ENCODE measurements at regions of chr5 and their contacts with region 1.

Region 1: DNA sequence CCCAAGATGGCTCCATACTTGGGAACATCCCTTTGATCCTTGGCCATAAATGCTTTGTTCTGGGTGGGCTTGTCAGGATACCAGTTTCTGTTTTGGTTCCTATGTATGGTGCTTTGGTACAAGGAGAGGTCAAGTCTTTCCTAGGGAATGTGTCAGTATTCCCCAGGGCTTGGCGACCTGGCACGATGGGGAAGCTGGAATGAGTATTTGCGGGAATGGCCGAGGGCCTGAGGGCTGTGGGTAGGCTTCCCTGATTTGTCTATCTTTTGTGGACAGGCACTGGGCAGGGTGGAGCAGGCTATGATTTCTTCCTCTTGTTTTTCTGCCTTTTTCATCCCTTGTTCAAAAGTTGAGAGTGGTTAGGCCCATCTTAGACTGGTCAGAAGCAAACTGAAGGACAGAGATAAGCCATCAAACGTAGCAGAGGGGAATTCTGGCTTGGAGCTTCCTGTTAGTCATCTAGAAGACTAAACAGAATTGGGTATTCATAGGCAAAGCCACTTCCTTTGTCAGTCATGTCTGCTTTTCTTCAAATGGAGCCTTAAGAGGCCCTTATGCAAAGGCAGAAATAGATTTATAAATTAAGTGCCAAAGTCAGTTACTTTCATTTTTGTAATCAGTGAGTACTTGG is 13.7 kb downstream of the DOCK2 start:
- DNase-seq: no peak
- ATAC-seq: peak; percentile 57
- H3K4me3 Mint-ChIP-seq: peak overlapping the region; percentile 79
- H3K27ac Mint-ChIP-seq: peak overlapping the region; percentile 86
- H3K4me1 Mint-ChIP-seq: peaks cover 89% of the 10 kb centered on the region
- H3K27me3 Mint-ChIP-seq: no peaks in the 10 kb centered on the region

Region 2: GRCh38 chr5:169637085-169637548 is 13.7 kb before region 1 on chr5 and contains the start of gene DOCK2:
- POLR2A ChIA-PET with region 1: interaction called, 39 read pairs
- DNase-seq: peak; percentile 82
- ATAC-seq: peak; percentile 85
- H3K4me3 Mint-ChIP-seq: peak within 1 kb of the TSS; percentile 96
- H3K27ac Mint-ChIP-seq: peak within 1 kb of the TSS; percentile 98
- H3K4me1 Mint-ChIP-seq: peaks cover 32% of the 10 kb centered on the region
- H3K27me3 Mint-ChIP-seq: peaks cover 6% of the 10 kb centered on the region
- total RNA-seq, gene DOCK2: 266 to 275 TPM